ENCODE measurements at regions of chr22 and their contacts with region 1.

Region 1: GRCh38 chr22:32457031-32457430 is 7.2 kb downstream of the BPIFC start:
- DNase-seq: no peak
- ATAC-seq: no peak
- H3K4me3 Mint-ChIP-seq: no peak overlapping the region
- H3K27ac Mint-ChIP-seq: no peak overlapping the region
- H3K4me1 Mint-ChIP-seq: peaks cover 4% of the 10 kb centered on the region
- H3K27me3 Mint-ChIP-seq: peaks cover 61% of the 10 kb centered on the region
- CTCF ChIP-seq: no peak

Region 2: DNA sequence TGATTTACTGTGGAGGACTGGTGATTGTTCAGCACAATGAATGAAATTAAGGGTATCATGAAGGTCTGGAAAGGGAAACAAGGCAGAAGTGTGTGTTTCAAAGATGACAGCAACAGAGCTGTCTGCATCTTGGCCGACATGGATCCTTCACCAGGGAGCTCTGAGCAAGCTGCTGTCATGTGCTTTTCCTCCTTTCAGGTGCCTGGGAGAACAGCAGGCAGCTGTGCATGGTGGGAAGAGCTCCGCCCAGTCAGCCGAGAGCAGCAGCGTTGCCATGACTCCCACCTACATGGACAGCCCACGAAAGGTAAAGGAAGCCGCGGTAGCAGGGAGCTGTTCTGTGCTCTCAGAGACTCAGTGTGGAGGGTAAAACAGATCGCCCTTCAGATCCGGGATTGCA is 599.8 kb before region 1 on chr22:
- CTCF ChIA-PET with region 1: no interaction called
- POLR2A ChIA-PET with region 1: interaction called, 10 read pairs
- intact Hi-C with region 1: no loop called
- DNase-seq: no peak
- ATAC-seq: no peak
- H3K4me3 Mint-ChIP-seq: no peak overlapping the region
- H3K27ac Mint-ChIP-seq: no peak overlapping the region
- H3K4me1 Mint-ChIP-seq: no peaks in the 10 kb centered on the region
- H3K27me3 Mint-ChIP-seq: no peaks in the 10 kb centered on the region
- CTCF ChIP-seq: no peak

Region 3: GRCh38 chr22:32270641-32271369 is 186.2 kb before region 1 on chr22:
- CTCF ChIA-PET with region 1: no interaction called
- POLR2A ChIA-PET with region 1: no interaction called
- intact Hi-C with region 1: no loop called
- DNase-seq: no peak
- ATAC-seq: no peak
- H3K4me3 Mint-ChIP-seq: no peak overlapping the region
- H3K27ac Mint-ChIP-seq: no peak overlapping the region
- H3K4me1 Mint-ChIP-seq: no peaks in the 10 kb centered on the region
- H3K27me3 Mint-ChIP-seq: peaks cover 3% of the 10 kb centered on the region
- CTCF ChIP-seq: no peak